Tibial artery (tissue), 4 donors: ENCODE measurements at regions of chr17 and their contacts with region 1.

Region 1: GRCh38 chr17:43393944-43394482 is 4.8 kb upstream of the ARL4D start:
- DNase-seq: peak; percentile 93 to 94
- H3K4me3 ChIP-seq: peak overlapping the region in 1 of 2 donors; percentile 17
- H3K27ac ChIP-seq: peak overlapping the region; percentile 36 to 59
- H3K4me1 ChIP-seq: peaks cover 0 to 22% (median 13%) of the 10 kb centered on the region in 4 donors
- H3K27me3 ChIP-seq: no peaks in the 10 kb centered on the region
- CTCF ChIP-seq: peak; percentile 91 to 99

Region 2: DNA sequence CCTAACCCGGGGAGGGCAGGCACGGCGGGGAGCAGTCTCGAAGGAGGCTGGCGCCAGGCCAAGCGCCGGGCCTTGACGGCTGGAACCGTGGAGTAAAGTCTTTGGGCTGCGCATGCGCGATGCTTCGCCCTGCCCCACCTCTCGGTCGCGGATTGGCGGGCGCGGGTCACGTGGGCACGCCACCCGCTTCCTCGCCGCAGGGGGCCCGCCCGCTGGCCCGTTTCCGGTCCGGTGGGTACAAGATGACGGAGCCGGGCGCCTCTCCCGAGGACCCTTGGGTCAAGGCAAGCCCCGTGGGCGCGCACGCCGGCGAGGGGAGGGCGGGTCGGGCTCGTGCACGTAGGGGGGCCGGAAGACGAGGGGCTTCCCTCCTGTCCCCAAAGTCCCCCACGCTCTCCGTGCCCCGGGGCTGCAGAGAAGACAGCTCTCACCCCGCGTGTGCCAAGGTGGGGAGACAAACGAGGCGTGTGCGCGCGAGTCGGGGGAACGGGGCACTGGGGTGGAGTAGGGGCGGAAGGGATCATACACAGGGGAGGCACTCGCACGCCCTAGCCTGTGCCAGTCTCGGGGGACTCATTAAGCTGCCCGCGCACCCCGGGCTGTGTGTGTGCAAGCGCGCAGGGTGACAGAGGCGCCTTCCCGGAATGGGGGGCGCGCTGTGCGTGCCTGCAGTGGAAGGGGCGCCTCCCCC is 827.0 kb before region 1 on chr17 and contains the start of gene MLX:
- intact Hi-C with region 1: no loop called
- DNase-seq: peak; percentile 92 to 97
- H3K4me3 ChIP-seq: peak within 1 kb of the TSS; percentile 80
- H3K27ac ChIP-seq: peak within 1 kb of the TSS; percentile 91 to 92
- H3K4me1 ChIP-seq: peaks cover 4 to 66% (median 46%) of the 10 kb centered on the region in 4 donors
- H3K27me3 ChIP-seq: no peaks in the 10 kb centered on the region
- CTCF ChIP-seq: no peak

Region 3: DNA sequence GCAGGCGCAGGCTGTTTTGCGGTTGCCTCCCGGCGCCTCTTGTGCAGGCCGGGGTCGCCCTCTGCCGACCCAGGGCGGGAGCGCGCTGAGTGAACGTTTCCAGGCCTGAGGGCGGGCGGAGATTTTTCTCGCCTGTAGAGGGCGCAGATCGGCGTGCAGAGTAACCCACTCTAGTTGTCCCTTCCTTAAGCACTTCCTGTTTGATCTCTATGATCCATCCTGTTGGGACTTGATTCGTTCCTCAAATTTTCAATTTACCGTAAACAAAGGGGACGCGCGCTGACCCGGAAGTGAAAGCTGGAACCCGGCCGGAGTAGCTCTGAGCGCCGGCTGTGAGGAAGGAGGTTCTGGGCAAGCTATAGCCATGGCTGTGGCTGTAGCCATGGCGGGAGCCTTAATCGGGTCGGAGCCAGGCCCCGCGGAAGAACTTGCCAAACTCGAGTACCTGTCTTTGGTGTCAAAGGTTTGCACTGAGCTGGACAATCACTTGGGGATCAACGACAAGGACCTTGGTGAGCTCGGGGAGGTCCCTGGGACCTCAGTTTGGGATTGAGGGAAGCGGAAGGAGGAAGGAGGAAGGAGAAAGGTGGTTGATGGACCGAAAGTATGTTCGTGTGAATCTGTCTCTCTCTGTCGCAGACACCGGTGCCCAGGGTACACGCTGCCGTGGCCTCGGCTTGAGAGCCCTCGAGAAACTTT is 89.8 kb after region 1 on chr17 and contains the start of gene DHX8:
- intact Hi-C with region 1: loop called (anchors 1 kb)
- DNase-seq: peak; percentile 95 to 98
- H3K4me3 ChIP-seq: peak within 1 kb of the TSS; percentile 63 to 78
- H3K27ac ChIP-seq: peak within 1 kb of the TSS; percentile 78 to 88
- H3K4me1 ChIP-seq: peaks cover 0 to 41% (median 26%) of the 10 kb centered on the region in 4 donors
- H3K27me3 ChIP-seq: no peaks in the 10 kb centered on the region
- CTCF ChIP-seq: peak; percentile 100